HepG2 (cell line): ENCODE measurements at regions of chr17 and their contacts with region 1.

Region 1: DNA sequence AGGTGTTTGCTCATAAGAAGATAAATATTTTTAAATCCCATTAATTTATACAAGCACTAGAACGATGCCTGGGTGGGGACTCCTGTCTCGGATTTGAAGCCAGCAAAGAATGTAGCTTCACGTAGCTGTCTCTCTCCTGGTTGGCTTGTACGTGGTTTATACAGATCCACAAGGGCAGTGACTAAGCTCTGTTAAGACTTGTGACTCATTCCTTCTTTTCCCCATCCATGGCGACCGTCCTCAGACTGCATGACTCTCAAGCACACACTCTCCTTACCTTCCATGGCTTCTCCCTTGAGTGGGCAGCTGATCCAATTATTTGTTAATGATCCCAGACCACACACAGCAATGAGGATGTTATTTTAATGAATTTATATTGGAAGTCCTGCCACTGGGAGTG is 679.7 kb upstream of the SOX9 start:
- DNase-seq: no peak
- ATAC-seq: no peak
- H3K4me3 ChIP-seq: no peak overlapping the region
- H3K27ac ChIP-seq: no peak overlapping the region
- H3K4me1 ChIP-seq: no peaks in the 10 kb centered on the region
- H3K27me3 ChIP-seq: no peaks in the 10 kb centered on the region
- CTCF ChIP-seq: no peak
- EP300 ChIP-seq: no peak
- POLR2A ChIP-seq: no peak
- RAD21 ChIP-seq: no peak

Region 2: DNA sequence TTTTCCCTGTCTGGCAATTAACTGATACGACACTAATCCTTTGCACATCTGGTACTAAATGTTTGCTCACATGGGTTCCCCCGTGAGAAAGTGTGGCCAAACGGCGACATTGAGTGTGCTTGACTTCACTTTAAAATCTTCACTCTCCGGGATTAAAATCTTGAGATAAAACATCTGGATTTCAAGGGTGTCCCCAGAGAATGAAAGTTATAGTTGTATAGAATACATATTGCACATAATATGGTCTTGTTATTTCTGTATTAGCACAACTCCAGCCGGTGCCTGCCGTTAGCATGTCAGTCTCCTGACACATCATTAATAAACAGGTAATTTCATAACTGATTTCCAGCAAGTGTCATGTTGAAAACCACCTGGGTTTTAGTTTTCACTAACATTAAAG is 69.3 kb before region 1 on chr17:
- CTCF ChIA-PET with region 1: no interaction called
- POLR2A ChIA-PET with region 1: no interaction called
- in situ Hi-C with region 1: no loop called
- intact Hi-C with region 1: loop called (anchors 1 kb)
- DNase-seq: no peak
- ATAC-seq: no peak
- H3K4me3 ChIP-seq: no peak overlapping the region
- H3K27ac ChIP-seq: no peak overlapping the region
- H3K4me1 ChIP-seq: no peaks in the 10 kb centered on the region
- H3K27me3 ChIP-seq: no peaks in the 10 kb centered on the region
- CTCF ChIP-seq: no peak
- EP300 ChIP-seq: no peak
- POLR2A ChIP-seq: no peak
- RAD21 ChIP-seq: no peak